ENCODE measurements at regions of chr3 and their contacts with region 1.

Region 1: GRCh38 chr3:108006077-108006771 is 84.6 kb downstream of the CD47 start:
- DNase-seq: no peak
- H3K4me3 ChIP-seq: no peak overlapping the region
- H3K27ac ChIP-seq: no peak overlapping the region
- H3K4me1 ChIP-seq: peaks cover 0 to 12% of the 10 kb centered on the region in 2 donors
- H3K27me3 ChIP-seq: no peaks in the 10 kb centered on the region
- CTCF ChIP-seq: no peak

Region 2: GRCh38 chr3:107927361-107928083 is 78.7 kb before region 1 on chr3:
- intact Hi-C with region 1: loop called (anchors 5 kb)
- DNase-seq: peak in 1 of 2 donors; percentile 83
- H3K4me3 ChIP-seq: peak overlapping the region; percentile 51 to 75
- H3K27ac ChIP-seq: no peak overlapping the region
- H3K4me1 ChIP-seq: no peaks in the 10 kb centered on the region
- H3K27me3 ChIP-seq: no peaks in the 10 kb centered on the region
- CTCF ChIP-seq: peak; percentile 70 to 96 (median 91)

Region 3: GRCh38 chr3:107987036-107987947 is 18.9 kb before region 1 on chr3:
- intact Hi-C with region 1: no loop called
- DNase-seq: peak in 1 of 2 donors; percentile 92
- H3K4me3 ChIP-seq: no peak overlapping the region
- H3K27ac ChIP-seq: peak overlapping the region; percentile 44 to 62
- H3K4me1 ChIP-seq: peaks cover 0 to 17% of the 10 kb centered on the region in 2 donors
- H3K27me3 ChIP-seq: no peaks in the 10 kb centered on the region
- CTCF ChIP-seq: no peak

Region 4: DNA sequence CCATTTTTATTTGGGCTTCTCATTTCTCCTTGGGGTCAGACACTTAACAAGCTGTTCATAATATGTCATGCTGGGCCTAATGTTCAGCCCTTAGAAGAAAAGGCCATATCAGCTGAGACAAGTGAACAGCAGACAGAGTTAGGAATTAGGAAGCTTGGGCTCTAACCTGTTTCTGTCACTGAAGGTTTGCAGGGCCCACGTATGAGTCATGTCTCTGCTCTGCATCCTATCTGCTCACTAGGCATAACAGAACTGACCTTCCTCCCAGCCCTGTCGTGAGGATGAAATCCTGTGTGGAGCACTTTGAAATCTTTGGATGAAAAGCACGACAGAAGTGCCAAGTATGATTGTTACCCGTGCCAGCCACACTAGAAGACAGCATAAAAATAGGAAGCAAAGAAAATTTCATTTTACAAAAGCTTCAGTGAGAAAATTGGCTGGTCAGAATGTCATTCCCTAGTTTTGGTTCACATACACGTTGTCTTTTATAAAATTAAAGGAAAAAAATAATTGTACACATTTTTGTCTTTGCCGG is 111.1 kb after region 1 on chr3:
- intact Hi-C with region 1: no loop called
- DNase-seq: no peak
- H3K4me3 ChIP-seq: no peak overlapping the region
- H3K27ac ChIP-seq: no peak overlapping the region
- H3K4me1 ChIP-seq: no peaks in the 10 kb centered on the region
- H3K27me3 ChIP-seq: no peaks in the 10 kb centered on the region
- CTCF ChIP-seq: no peak

Measured in ascending aorta (tissue), 2 donors.